Natural killer cell (primary cell): ENCODE measurements at regions of chr1 and their contacts with region 1.

Region 1: GRCh38 chr1:28736450-28737306 is at the start of gene YTHDF2:
- DNase-seq: peak; percentile 96 to 99
- ATAC-seq: peak; percentile 93 to 99 (median 94)
- H3K4me3 ChIP-seq: peak within 1 kb of the TSS; percentile 92
- H3K4me3 Mint-ChIP-seq: peak within 1 kb of the TSS; percentile 95
- H3K27ac ChIP-seq: peak within 1 kb of the TSS; percentile 90
- H3K27ac Mint-ChIP-seq: peak within 1 kb of the TSS; percentile 90 to 93
- H3K4me1 ChIP-seq: peaks cover 27% of the 10 kb centered on the region
- H3K4me1 Mint-ChIP-seq: peaks cover 35 to 39% of the 10 kb centered on the region in 2 donors
- H3K27me3 ChIP-seq: no peaks in the 10 kb centered on the region
- H3K27me3 Mint-ChIP-seq: no peaks in the 10 kb centered on the region
- CTCF ChIP-seq: peak; percentile 82
- total RNA-seq, gene YTHDF2: 78.9 to 98.3 (median 97.9) TPM

Region 2: DNA sequence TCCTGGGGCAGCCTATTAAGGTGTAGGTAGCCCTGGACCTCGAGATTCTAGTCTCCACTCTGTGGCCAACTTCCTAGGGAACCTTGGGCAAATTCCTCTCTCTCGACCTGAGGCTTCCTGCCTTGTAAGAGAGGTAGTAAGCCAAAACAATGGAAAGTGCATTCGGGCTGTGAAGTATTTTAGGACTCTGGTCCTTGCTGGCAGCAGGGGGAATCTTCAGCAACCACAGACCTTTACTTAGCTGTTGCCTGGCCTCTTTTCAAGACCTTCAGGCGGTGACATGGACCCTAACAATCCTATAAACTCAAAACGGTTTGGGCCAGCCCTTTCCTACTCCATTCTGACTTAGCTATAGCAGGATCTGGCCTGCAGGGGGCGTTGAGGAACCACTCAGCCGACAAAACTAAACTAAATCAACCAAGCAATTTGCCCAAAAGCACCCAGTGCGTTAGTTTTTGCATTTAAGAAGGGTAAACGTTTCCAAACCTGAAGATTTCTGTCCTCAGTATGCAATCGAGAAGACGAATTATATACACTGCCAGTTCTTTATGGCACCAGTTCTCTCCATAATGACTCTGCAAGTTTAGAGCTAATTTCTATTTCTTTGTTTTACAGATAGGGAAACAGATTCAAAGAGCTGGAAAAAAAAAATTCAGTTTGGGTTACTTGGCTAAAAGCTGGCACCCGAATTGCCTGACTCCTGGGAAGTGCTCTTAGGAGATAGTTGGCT is 488.2 kb before region 1 on chr1:
- intact Hi-C with region 1: loop called (anchors 5 kb)
- DNase-seq: peak; percentile 79 to 92
- ATAC-seq: peak; percentile 18 to 41 (median 32)
- H3K4me3 ChIP-seq: no peak overlapping the region
- H3K4me3 Mint-ChIP-seq: peak overlapping the region; percentile 95
- H3K27ac ChIP-seq: peak overlapping the region; percentile 87
- H3K27ac Mint-ChIP-seq: peak overlapping the region; percentile 96 to 98
- H3K4me1 ChIP-seq: peaks cover 52% of the 10 kb centered on the region
- H3K4me1 Mint-ChIP-seq: peaks cover 48 to 56% of the 10 kb centered on the region in 2 donors
- H3K27me3 ChIP-seq: no peaks in the 10 kb centered on the region
- H3K27me3 Mint-ChIP-seq: no peaks in the 10 kb centered on the region
- CTCF ChIP-seq: peak; percentile 87

Region 3: GRCh38 chr1:28581536-28582247 is 155.0 kb before region 1 on chr1:
- intact Hi-C with region 1: loop called (anchors 2 kb)
- DNase-seq: peak; percentile 80 to 96
- ATAC-seq: peak; percentile 90 to 95 (median 94)
- H3K4me3 ChIP-seq: peak overlapping the region; percentile 89
- H3K4me3 Mint-ChIP-seq: peak overlapping the region; percentile 92
- H3K27ac ChIP-seq: peak overlapping the region; percentile 65
- H3K27ac Mint-ChIP-seq: peak overlapping the region; percentile 83 to 89
- H3K4me1 ChIP-seq: peaks cover 27% of the 10 kb centered on the region
- H3K4me1 Mint-ChIP-seq: peaks cover 38 to 41% of the 10 kb centered on the region in 2 donors
- H3K27me3 ChIP-seq: no peaks in the 10 kb centered on the region
- H3K27me3 Mint-ChIP-seq: peaks cover 0 to 3% of the 10 kb centered on the region in 2 donors
- CTCF ChIP-seq: peak; percentile 5

Region 4: DNA sequence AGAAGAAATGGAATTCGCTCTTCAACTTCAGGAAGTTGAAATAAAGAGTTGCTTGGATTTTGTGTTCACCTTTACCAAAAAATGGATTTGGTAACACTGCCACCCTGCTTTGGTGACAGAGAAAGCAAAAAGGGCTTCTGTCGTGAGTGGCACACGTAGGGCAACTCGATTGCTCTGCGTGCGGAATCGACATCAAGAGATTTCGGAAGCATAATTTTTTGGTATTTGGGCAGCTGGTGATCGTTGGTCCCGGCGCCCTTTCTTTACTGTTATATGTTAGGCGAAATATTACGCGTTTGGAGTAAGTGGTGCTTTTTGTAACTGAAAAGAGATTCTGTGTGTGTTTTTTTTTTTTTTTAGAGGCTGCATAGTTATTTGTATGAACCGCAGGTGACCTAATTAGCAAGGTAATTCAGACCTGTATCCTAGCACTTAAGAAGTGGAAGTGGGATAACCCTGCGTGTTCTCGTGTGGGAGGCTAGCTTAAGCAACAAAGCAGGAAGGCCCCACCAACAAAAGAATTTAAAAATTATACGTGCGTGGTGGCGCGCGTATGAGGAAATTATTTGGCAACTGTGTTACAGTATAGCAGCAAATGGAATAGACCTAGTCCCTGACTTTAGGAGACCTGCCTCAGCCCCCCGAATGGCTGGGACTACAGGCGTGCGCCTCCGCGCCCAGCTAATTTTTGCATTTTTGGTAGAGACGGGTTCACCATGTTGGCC is 88.0 kb before region 1 on chr1 and contains the start of gene RNU11:
- intact Hi-C with region 1: loop called (anchors 1 kb)
- DNase-seq: peak; percentile 80 to 96
- ATAC-seq: peak; percentile 72 to 91 (median 77)
- H3K4me3 ChIP-seq: peak within 1 kb of the TSS; percentile 38
- H3K4me3 Mint-ChIP-seq: peak within 1 kb of the TSS; percentile 89
- H3K27ac ChIP-seq: peak within 1 kb of the TSS; percentile 95
- H3K27ac Mint-ChIP-seq: peak within 1 kb of the TSS; percentile 96 to 100
- H3K4me1 ChIP-seq: peaks cover 34% of the 10 kb centered on the region
- H3K4me1 Mint-ChIP-seq: peaks cover 25 to 27% of the 10 kb centered on the region in 2 donors
- H3K27me3 ChIP-seq: no peaks in the 10 kb centered on the region
- H3K27me3 Mint-ChIP-seq: no peaks in the 10 kb centered on the region
- CTCF ChIP-seq: no peak
- total RNA-seq, gene RNU11: not detected

Region 5: DNA sequence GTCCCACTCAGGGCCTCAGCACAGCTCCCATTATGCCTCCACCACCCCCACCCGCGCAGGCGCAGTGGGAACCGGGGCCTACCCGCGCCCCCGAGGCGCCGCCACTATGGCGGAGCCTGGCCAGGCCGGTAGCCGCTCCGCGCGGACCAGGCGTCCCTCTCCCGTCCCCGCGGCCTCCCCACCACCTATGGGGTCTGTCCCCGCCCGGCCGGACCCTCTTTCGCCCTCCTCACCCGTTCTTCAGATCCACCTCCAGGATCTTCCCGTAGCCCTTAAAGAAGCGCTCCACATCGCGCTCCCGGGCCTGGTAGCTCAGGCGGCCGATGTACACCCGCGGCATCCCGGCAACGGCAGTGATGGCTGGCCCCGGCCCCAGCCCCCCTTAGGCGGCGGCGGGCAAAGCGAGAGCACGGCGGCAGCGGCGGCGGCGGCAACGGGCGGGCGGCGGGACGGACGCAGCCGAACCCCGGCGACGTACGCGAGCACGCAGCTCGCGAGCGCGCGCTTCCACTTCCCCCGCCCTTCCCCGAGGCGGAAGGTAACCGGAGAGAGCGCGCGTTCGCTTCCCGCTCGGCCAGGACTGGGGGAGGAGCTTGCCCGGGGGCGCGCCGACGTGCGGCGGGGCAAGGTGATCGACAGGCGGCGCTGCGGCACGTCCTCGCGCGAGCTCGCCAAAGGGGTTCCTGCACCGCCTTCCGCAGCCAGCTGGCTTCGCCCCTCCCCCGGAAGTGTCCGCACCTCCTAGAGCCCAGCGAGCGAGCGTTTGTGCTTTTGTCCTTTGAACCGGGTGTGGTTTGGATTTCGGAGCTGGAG is 444.9 kb after region 1 on chr1 and contains the start of gene SRSF4:
- intact Hi-C with region 1: loop called (anchors 2 kb)
- DNase-seq: peak; percentile 99
- ATAC-seq: peak; percentile 91 to 98 (median 91)
- H3K4me3 ChIP-seq: peak within 1 kb of the TSS; percentile 100
- H3K4me3 Mint-ChIP-seq: peak within 1 kb of the TSS; percentile 93
- H3K27ac ChIP-seq: peak within 1 kb of the TSS; percentile 100
- H3K27ac Mint-ChIP-seq: peak within 1 kb of the TSS; percentile 94 to 95
- H3K4me1 ChIP-seq: peaks cover 30% of the 10 kb centered on the region
- H3K4me1 Mint-ChIP-seq: peaks cover 38 to 42% of the 10 kb centered on the region in 2 donors
- H3K27me3 ChIP-seq: no peaks in the 10 kb centered on the region
- H3K27me3 Mint-ChIP-seq: no peaks in the 10 kb centered on the region
- CTCF ChIP-seq: peak; percentile 71
- total RNA-seq, gene SRSF4: 90.2 to 114 (median 101) TPM